ENCODE measurements at regions of chr6 and their contacts with region 1.

Region 1: DNA sequence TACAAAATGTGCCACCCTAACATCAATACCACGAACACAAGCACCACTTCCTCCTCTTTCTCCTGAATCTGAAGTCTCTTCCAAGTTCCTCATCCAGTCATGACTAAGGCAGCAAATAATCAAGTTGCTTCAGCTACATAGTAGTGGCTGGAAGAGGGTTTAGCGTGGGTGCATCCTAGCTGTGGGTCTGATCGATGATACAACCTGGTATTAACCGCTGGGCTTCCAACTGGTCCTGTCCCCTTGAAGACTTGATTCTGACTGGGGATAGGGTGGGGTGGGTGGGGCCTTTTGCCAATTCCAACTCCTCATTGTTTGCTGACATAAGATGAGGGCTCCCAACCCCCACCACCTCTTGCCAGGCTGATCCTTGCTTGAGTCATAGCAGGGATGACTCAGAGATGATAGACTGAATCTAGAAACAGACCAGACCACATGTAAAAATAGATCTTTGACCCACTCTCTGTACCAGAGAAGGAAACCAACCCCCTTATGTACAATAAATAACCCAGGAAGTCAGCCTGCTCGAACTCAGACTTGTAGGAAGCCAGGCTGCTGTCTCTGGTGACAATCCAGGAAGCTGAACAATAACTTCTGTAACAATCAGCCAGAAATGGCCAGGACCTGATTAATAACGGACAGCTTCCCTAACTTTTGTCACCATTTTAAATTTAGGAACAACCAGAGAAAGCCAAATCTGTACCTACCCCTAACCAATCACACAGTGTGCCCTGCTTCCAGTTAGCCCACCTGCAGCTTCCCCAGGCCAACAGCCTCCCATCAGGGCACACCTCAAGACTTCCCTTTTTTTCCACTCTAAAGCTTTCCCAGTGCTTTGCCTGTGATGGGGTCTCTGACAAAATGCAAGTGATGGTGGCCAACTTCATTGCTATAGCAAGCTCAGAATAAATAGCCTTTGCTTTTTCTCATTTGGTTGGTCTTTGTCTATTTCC is 68.9 kb upstream of the FAM184A start:
- DNase-seq: peak; percentile 97
- H3K27ac ChIP-seq: peak overlapping the region; percentile 72
- CTCF ChIP-seq: no peak

Region 2: GRCh38 chr6:119190176-119190575 is 42.8 kb after region 1 on chr6:
- CTCF ChIA-PET with region 1: no interaction called
- POLR2A ChIA-PET with region 1: no interaction called
- DNase-seq: no peak
- H3K27ac ChIP-seq: no peak overlapping the region
- CTCF ChIP-seq: no peak

Region 3: DNA sequence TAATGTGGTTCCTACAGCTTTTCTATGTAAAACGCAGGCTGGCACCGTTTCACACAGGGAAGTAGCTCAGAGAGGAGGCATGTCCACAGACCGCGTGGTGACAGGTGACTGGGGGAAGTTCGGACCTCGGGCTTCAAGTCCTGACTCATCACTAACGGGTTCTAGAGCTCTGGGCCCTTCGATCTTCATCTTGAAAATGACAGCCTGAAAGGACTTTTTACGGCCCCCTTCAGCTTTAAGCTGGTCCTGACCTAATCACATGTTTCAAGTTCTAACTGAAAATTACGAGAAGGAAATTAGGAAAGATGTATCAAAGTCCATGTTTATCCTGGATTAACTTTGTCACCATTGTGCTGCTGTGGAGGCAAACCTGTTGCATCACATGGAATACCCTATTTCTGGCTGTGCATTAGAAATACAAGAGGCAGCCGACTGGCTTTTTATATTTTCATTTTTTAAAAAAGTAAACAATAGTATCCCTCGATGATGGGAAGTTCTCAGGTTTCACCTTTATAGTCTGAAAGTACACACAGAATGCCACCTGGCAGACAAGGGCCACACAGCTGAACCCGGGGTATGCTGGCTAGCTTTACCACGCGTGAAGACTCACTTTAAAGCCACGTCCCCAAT is 200.2 kb after region 1 on chr6:
- CTCF ChIA-PET with region 1: interaction called, 10 read pairs
- POLR2A ChIA-PET with region 1: no interaction called
- DNase-seq: no peak
- H3K27ac ChIP-seq: no peak overlapping the region; the same call in 1 of the 2 replicates
- CTCF ChIP-seq: no peak

Region 4: GRCh38 chr6:119384444-119384843 is 237.1 kb after region 1 on chr6:
- CTCF ChIA-PET with region 1: no interaction called
- POLR2A ChIA-PET with region 1: no interaction called
- DNase-seq: no peak
- H3K27ac ChIP-seq: no peak overlapping the region
- CTCF ChIP-seq: no peak